Esophagus muscularis mucosa (tissue), 4 donors: ENCODE measurements at regions of chr22 and their contacts with region 1.

Region 1: DNA sequence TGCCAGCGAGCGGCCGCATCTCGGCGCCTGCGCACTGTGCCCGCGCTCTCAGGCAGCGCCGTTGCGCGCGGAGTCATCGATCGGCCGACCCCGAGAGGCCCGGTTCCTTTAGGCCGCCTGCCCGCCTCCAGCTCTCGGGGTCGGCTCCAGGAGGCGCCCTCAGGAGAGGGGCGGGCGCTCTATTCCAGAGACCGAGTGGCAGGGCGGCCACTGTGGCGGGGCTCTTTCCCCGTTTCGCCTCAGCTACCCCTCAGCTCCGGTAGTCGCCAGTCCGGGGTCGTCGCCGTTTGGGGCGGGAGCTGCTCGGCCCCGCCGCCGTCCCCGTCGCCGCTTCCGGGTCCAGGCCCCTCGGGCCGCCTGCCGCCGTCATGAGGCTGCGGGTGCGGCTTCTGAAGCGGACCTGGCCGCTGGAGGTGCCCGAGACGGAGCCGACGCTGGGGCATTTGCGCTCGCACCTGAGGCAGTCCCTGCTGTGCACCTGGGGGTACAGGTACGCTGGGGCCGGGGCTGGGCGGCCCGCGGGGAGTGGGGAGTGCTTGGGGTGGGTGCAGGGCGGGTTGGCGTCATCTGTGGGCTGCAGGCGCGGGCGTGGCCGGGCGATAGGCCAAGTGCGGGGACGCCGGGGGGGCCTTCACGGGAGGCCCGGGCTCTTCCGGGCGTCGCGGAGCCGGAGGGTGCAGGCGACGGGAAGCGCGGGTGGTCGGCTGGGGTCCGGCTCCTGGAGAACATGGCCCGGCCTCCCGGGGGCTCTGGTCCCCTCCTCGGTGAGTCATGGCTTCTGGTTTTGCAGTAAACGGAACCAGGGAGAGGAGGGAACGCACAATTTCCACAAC is at the start of gene FBXO7:
- DNase-seq: peak; percentile 93
- H3K4me3 ChIP-seq: peak within 1 kb of the TSS; percentile 89 to 97 (median 93)
- H3K27ac ChIP-seq: peak within 1 kb of the TSS; percentile 99 to 100 (median 99)
- H3K4me1 ChIP-seq: peaks cover 25 to 52% (median 43%) of the 10 kb centered on the region in 4 donors
- H3K27me3 ChIP-seq: no peaks in the 10 kb centered on the region
- CTCF ChIP-seq: peak; percentile 34 to 56 (median 49)
- EP300 ChIP-seq: no peak
- POLR2A ChIP-seq: peak; percentile 29
- total RNA-seq, gene FBXO7: 73.6 to 91.4 (median 83.8) TPM

Region 2: GRCh38 chr22:32411829-32412592 is 62.8 kb before region 1 on chr22 and contains the start of gene RTCB:
- intact Hi-C with region 1: loop called (anchors 5 kb)
- DNase-seq: peak; percentile 93
- H3K4me3 ChIP-seq: peak within 1 kb of the TSS; percentile 64 to 92 (median 84)
- H3K27ac ChIP-seq: peak within 1 kb of the TSS; percentile 65 to 75 (median 68)
- H3K4me1 ChIP-seq: peaks cover 18 to 31% (median 25%) of the 10 kb centered on the region in 4 donors
- H3K27me3 ChIP-seq: no peaks in the 10 kb centered on the region
- CTCF ChIP-seq: no peak
- EP300 ChIP-seq: no peak
- POLR2A ChIP-seq: no peak
- total RNA-seq, gene RTCB: 46.9 to 71.0 (median 59.1) TPM